Activated CD8-positive, alpha-beta T cell treated with anti-CD3 and anti-CD28 coated beads, Interleukin-2, amount 10 ng/mL, durations not matched to agents 7 days and 5 days (primary cell): ENCODE measurements at regions of chr1 and their contacts with region 1.

Region 1: GRCh38 chr1:67314696-67315095 is 7.0 kb downstream of the IL12RB2 start:
- DNase-seq: peak; percentile 18
- ATAC-seq: peak; percentile 36
- H3K4me3 Mint-ChIP-seq: peak overlapping the region; percentile 22
- H3K27ac Mint-ChIP-seq: peak overlapping the region; percentile 46
- H3K4me1 Mint-ChIP-seq: peaks cover 43% of the 10 kb centered on the region
- H3K27me3 Mint-ChIP-seq: no peaks in the 10 kb centered on the region

Region 2: GRCh38 chr1:67332653-67333529 is 18.2 kb after region 1 on chr1:
- CTCF ChIA-PET with region 1: interaction called, 12 read pairs
- POLR2A ChIA-PET with region 1: interaction called, 19 read pairs
- DNase-seq: peak; percentile 71
- ATAC-seq: peak; percentile 86
- H3K4me3 Mint-ChIP-seq: peak overlapping the region; percentile 45
- H3K27ac Mint-ChIP-seq: peak overlapping the region; percentile 91
- H3K4me1 Mint-ChIP-seq: peaks cover 71% of the 10 kb centered on the region
- H3K27me3 Mint-ChIP-seq: no peaks in the 10 kb centered on the region